Right ventricle myocardium inferior (tissue), 1 donor: ENCODE measurements at regions of chr2 and their contacts with region 1.

Region 1: DNA sequence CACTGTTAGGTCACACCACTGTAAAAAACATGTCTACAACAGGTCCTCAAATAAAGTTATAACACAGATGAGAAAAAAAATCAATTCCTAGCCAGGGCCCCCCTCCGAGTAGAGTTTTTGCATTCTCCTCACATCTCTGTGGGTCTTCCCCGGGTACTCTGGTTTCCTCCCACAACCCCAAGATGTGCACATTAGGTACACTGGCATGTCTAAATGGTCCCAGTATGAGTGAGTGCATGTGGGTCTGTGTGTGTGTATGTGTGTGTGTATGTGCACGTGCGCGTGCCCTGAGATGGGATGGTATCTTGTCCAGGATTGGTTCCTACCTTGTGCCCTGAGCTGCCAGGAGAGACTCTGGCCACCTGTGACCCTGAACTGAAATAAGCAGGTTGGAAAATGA is 4.9 kb downstream of the TYW5 start:
- DNase-seq: no peak
- ATAC-seq: no peak

Region 2: DNA sequence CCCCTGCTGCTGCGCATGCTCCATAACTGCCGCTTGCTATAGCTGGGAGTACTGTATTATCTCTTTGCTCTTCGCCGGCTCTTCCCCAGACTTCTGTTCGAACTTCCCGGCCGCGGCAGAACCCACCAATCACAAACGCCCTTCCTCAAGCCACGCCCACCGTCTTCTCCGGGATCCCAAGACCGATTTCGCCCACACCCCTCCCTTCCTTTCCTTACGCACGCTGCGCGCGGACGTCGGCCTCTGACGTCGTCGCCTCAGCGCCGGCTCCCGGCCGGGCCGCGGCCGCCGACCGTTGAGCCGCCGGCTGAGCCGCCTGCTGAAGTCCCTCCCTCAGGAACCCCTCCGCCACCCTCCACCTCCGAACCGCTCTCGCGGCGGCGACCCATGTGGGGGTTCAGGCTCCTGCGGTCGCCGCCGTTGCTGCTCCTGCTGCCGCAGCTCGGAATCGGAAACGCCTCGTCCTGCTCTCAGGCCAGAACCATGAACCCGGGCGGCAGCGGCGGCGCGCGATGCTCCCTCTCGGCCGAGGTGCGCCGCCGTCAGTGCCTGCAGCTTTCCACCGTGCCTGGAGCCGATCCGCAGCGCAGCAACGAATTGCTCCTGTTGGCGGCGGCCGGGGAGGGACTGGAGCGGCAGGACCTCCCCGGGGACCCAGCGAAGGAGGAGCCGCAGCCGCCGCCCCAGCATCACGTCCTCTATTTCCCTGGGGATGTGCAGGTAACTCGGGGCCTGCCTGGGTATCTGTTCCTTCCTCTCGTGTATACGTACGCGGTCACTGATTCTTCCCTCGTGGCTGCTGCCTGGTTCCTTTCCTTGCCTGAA is 39.1 kb before region 1 on chr2 and contains the start of gene C2orf69:
- intact Hi-C with region 1: loop called (anchors 5 kb)
- DNase-seq: peak; percentile 97
- ATAC-seq: peak; percentile 99
- total RNA-seq, gene C2orf69: 8.0 TPM

Region 3: GRCh38 chr2:200306196-200306930 is 356.0 kb after region 1 on chr2 and contains the start of gene SPATS2L:
- intact Hi-C with region 1: no loop called
- DNase-seq: peak; percentile 89
- ATAC-seq: peak; percentile 88
- total RNA-seq, gene SPATS2L: 89.5 TPM